Activated B cell treated with CpG ODN at 0.5 μM for 24 hours (primary cell): ENCODE measurements at regions of chr4 and their contacts with region 1.

Region 1: DNA sequence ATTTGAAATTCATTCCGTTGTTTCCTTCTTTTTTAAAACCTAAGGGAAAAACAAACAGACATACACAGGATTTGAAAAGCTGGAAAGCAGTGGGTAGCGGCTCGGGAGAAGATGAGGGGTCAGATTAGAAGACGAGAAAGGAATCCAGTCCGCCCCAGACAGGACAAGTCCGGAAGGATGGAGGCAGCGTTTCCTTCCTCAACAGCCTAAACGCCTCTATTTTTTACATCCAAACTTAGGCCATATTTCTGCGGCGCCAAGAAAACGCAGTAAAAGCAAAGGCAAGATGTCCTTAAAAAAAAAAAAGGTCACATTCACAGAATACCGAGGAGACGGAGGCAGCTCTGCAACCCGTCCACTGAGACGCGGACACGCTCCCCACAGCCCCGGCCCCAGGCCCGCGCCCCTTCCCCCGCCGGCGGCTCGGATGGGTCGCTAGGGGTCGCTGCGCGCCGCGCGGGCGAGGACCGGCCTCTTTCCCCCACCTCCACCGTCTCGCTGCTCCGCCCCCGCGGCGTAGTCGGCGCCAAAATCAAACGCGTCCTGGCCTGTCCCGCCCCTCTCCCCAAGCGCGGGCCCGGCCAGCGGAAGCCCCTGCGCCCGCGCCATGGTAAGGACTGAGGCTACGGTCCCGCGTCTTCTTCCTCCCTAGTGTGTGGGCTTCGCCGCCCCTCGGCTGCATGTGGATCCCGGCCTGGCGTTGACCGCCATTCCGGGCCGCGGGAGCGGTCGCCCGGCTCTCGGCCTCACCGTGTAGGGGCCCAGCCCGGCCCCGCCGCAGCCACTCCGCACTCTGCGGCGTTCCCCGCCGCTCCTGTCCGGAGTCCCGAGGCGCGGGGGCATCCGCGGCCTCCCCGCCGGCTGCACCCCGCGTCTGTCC is at the start of gene MND1:
- DNase-seq: peak; percentile 91
- ATAC-seq: peak; percentile 93
- H3K4me3 Mint-ChIP-seq: peak within 1 kb of the TSS; percentile 94
- H3K27ac Mint-ChIP-seq: no peak within 1 kb of the TSS
- H3K4me1 Mint-ChIP-seq: peaks cover 44% of the 10 kb centered on the region
- H3K27me3 Mint-ChIP-seq: no peaks in the 10 kb centered on the region
- CTCF ChIP-seq: peak; percentile 72
- total RNA-seq, gene MND1: 0.27 and 0.53 TPM in 2 replicates

Region 2: GRCh38 chr4:152408514-152409327 is 935.6 kb before region 1 on chr4:
- CTCF ChIA-PET with region 1: no interaction called
- POLR2A ChIA-PET with region 1: no interaction called
- intact Hi-C with region 1: no loop called
- DNase-seq: no peak
- ATAC-seq: no peak
- H3K4me3 Mint-ChIP-seq: no peak overlapping the region
- H3K27ac Mint-ChIP-seq: no peak overlapping the region
- H3K4me1 Mint-ChIP-seq: peaks cover 5% of the 10 kb centered on the region
- H3K27me3 Mint-ChIP-seq: no peaks in the 10 kb centered on the region
- CTCF ChIP-seq: no peak

Region 3: DNA sequence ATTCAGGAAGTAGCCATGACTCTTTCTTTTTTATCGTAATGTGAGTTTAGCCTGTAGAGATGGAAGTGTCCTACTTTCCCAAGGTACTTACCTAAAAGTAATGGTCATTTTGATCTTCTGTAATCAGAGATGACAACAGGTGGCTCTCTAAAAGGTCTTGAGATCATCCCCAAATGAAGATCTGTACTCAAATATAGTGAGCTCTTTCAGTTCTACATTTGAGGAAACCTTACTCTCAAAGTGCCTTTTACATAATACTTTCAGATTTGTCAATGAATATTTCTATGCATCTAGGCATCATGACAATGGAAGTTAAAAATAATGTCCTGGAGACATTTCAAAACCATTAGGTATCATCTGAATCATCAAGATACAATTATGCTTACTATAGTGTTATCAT is 17.1 kb before region 1 on chr4:
- CTCF ChIA-PET with region 1: no interaction called
- POLR2A ChIA-PET with region 1: no interaction called
- intact Hi-C with region 1: no loop called
- DNase-seq: no peak
- ATAC-seq: no peak
- H3K4me3 Mint-ChIP-seq: no peak overlapping the region
- H3K27ac Mint-ChIP-seq: no peak overlapping the region
- H3K4me1 Mint-ChIP-seq: peaks cover 6% of the 10 kb centered on the region
- H3K27me3 Mint-ChIP-seq: peaks cover 3% of the 10 kb centered on the region
- CTCF ChIP-seq: no peak

Region 4: GRCh38 chr4:153438916-153439756 is 94.8 kb after region 1 on chr4:
- CTCF ChIA-PET with region 1: no interaction called
- POLR2A ChIA-PET with region 1: no interaction called
- intact Hi-C with region 1: loop called (anchors 1 kb)
- DNase-seq: peak; percentile 37
- ATAC-seq: peak; percentile 68
- H3K4me3 Mint-ChIP-seq: peak overlapping the region; percentile 83
- H3K27ac Mint-ChIP-seq: peak overlapping the region; percentile 92
- H3K4me1 Mint-ChIP-seq: peaks cover 67% of the 10 kb centered on the region
- H3K27me3 Mint-ChIP-seq: no peaks in the 10 kb centered on the region
- CTCF ChIP-seq: no peak

Region 5: GRCh38 chr4:153573881-153574802 is 229.8 kb after region 1 on chr4:
- CTCF ChIA-PET with region 1: interaction called, 21 read pairs
- POLR2A ChIA-PET with region 1: interaction called, 5 read pairs
- intact Hi-C with region 1: loop called (anchors 1 kb)
- DNase-seq: no peak
- ATAC-seq: peak; percentile 78
- H3K4me3 Mint-ChIP-seq: peak overlapping the region; percentile 32
- H3K27ac Mint-ChIP-seq: peak overlapping the region; percentile 82
- H3K4me1 Mint-ChIP-seq: peaks cover 77% of the 10 kb centered on the region
- H3K27me3 Mint-ChIP-seq: no peaks in the 10 kb centered on the region
- CTCF ChIP-seq: no peak

Region 6: GRCh38 chr4:153750197-153750817 is 405.9 kb after region 1 on chr4:
- CTCF ChIA-PET with region 1: interaction called, 4 read pairs
- POLR2A ChIA-PET with region 1: no interaction called
- intact Hi-C with region 1: loop called (anchors 1 kb)
- DNase-seq: no peak
- ATAC-seq: peak; percentile 57
- H3K4me3 Mint-ChIP-seq: no peak overlapping the region
- H3K27ac Mint-ChIP-seq: no peak overlapping the region
- H3K4me1 Mint-ChIP-seq: no peaks in the 10 kb centered on the region
- H3K27me3 Mint-ChIP-seq: peaks cover 13% of the 10 kb centered on the region
- CTCF ChIP-seq: peak; percentile 19

Region 7: DNA sequence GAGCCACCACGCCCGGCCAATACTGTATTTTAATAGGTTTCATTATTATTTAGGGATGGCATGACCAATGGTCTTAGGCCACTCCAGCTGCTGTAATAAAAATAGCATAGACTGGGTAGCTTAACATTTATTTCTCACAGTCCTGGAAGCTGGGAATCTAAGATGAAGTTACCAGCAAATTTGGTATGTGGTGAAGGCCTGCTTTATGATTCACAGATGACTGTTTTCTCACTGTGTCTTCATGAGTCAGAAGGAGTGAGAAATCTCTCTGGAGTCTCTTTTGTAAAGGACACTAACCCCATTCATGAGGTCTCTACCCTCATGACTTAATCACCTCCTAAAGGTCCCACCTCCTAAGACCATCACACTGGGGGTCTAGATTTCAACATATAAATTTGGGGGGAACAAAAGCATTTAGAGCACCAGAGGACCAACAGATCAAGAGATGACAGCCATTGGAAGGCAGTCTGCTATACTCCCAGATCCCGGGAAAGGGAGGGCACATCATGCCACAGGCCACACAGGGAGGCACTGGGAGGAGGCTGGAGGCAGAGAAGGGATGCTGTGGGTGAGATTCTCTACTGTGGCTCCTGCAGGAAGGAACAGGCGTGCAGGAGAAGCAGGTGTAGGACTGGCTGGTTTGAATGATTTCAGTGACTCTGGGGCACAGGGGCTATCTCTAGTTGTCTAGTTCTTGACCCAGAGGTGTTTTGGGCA is 780.3 kb after region 1 on chr4:
- CTCF ChIA-PET with region 1: no interaction called
- POLR2A ChIA-PET with region 1: no interaction called
- intact Hi-C with region 1: no loop called
- DNase-seq: no peak
- ATAC-seq: no peak
- H3K4me3 Mint-ChIP-seq: no peak overlapping the region
- H3K27ac Mint-ChIP-seq: no peak overlapping the region
- H3K4me1 Mint-ChIP-seq: no peaks in the 10 kb centered on the region
- H3K27me3 Mint-ChIP-seq: no peaks in the 10 kb centered on the region
- CTCF ChIP-seq: no peak

Region 8: DNA sequence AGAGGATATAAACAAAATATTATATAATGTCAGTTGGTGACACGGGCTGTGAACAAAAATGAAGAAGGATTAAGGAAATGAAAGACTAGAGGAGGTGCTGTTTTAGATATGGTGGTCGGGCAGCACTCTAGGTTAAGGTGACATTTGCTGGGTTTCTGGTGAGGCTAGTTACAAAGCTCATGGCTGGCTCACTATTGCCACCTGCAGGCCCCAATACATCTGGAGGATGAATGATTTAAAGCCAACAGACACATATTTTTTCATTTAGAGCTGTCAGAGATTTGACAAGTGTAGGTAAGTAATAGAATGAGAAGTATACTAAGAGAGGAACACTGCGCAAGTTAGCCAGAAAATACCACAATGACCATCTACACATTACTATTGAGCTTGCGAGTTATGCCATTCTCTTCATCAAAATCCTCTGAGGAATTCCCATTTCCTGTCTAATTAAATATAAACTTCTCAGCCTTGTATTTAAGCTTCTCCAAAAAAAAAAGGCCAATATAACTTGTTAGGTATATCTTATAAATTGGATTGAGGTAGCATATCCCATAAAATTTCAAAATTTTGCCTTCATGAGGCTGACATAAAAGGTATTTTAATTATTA is 1274.4 kb after region 1 on chr4:
- CTCF ChIA-PET with region 1: no interaction called
- POLR2A ChIA-PET with region 1: no interaction called
- intact Hi-C with region 1: loop called (anchors 10 kb)
- DNase-seq: peak; percentile 19
- ATAC-seq: peak; percentile 80
- H3K4me3 Mint-ChIP-seq: no peak overlapping the region
- H3K27ac Mint-ChIP-seq: no peak overlapping the region
- H3K4me1 Mint-ChIP-seq: peaks cover 15% of the 10 kb centered on the region
- H3K27me3 Mint-ChIP-seq: peaks cover 2% of the 10 kb centered on the region
- CTCF ChIP-seq: no peak